Caco-2 (cell line): ENCODE measurements at regions of chr5 and their contacts with region 1.

Region 1: GRCh38 chr5:157148734-157149615 is 6.3 kb upstream of the MED7 start:
- DNase-seq: peak; percentile 66 to 78
- H3K4me3 ChIP-seq: no peak overlapping the region
- H3K4me3 Mint-ChIP-seq: no peak overlapping the region
- H3K27ac Mint-ChIP-seq: no peak overlapping the region
- H3K4me1 ChIP-seq: no peaks in the 10 kb centered on the region
- H3K4me1 Mint-ChIP-seq: peaks cover 9% of the 10 kb centered on the region
- H3K27me3 ChIP-seq: no peaks in the 10 kb centered on the region
- H3K27me3 Mint-ChIP-seq: peaks cover 6% of the 10 kb centered on the region
- CTCF ChIP-seq: peak; percentile 78 to 88

Region 2: DNA sequence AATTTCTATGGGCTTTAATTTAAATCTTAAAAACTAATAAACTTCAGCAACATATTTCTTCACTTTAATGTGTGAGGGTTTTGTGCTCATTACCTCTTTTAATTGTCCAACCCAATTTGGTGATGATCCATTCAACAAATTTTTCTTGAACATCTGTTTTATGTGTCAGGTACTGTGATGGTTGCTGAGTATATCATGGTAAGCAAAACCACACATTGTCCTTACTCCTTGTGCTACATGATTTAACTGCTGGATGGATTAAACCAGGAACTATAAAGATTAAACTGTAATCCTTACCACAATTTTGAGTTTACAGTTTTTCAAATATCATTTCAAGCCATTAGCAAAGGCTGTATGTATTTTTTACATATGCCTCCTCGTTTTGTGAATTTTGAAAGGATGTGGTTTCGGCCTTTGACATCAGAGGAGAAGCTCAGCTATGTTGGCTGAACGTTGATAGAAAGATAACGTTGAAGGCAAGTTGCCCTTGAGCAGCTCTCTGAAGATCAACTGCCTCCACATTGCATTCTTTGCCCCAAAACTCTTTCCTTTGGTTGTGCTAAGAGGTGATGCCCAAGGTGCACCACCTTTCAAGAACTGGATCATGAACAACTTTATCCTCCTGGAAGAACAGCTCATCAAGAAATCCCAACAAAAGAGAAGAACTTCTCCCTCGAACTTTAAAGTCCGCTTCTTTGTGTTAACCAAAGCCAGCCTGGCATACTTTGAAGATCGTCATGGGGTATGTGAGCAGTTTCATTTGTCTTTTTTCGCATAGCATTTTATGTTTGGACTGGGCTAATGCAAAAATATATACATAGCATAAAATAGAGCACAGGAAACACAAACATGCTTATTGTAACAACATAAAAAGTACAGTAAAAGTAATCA is 31.6 kb after region 1 on chr5 and contains the start of gene ITK:
- CTCF ChIA-PET with region 1: no interaction called
- POLR2A ChIA-PET with region 1: no interaction called
- intact Hi-C with region 1: no loop called
- DNase-seq: no peak
- H3K4me3 ChIP-seq: no peak within 1 kb of the TSS
- H3K4me3 Mint-ChIP-seq: no peak within 1 kb of the TSS
- H3K27ac Mint-ChIP-seq: no peak within 1 kb of the TSS
- H3K4me1 ChIP-seq: no peaks in the 10 kb centered on the region
- H3K4me1 Mint-ChIP-seq: no peaks in the 10 kb centered on the region
- H3K27me3 ChIP-seq: no peaks in the 10 kb centered on the region; the same call in 1 of the 2 replicates
- H3K27me3 Mint-ChIP-seq: peaks cover 22% of the 10 kb centered on the region
- CTCF ChIP-seq: no peak
- total RNA-seq, gene ITK: not detected in 2 replicates

Region 3: DNA sequence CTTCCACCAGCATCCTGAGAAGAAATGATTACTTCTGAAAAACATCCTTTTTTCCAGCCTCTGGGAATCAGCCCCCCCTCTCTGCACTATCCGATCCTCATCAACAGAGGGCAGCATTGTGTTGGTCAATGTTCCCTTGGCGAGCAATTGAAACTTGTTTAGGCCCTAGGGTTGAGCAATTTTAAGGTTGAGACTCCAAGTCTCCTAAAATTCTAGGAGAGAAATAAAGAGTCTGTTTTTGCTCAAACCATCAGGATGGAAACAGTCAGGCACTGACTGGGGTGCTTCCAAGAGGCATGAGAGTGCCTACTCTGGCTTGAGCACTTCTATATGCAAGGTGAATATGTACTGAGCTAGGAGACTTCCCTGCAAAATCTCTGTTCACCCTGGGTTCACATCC is 104.6 kb after region 1 on chr5:
- CTCF ChIA-PET with region 1: interaction called, 3 read pairs
- POLR2A ChIA-PET with region 1: no interaction called
- intact Hi-C with region 1: loop called (anchors 5 kb)
- DNase-seq: peak in 1 of 2 experiments; percentile 70
- H3K4me3 ChIP-seq: no peak overlapping the region
- H3K4me3 Mint-ChIP-seq: no peak overlapping the region
- H3K27ac Mint-ChIP-seq: no peak overlapping the region
- H3K4me1 ChIP-seq: no peaks in the 10 kb centered on the region
- H3K4me1 Mint-ChIP-seq: no peaks in the 10 kb centered on the region
- H3K27me3 ChIP-seq: no peaks in the 10 kb centered on the region
- H3K27me3 Mint-ChIP-seq: peaks cover 8% of the 10 kb centered on the region
- CTCF ChIP-seq: peak; percentile 89 to 92